Activated CD4-positive, alpha-beta T cell treated with anti-CD3 and anti-CD28 coated beads, Interleukin-2, amount 10 ng/mL, durations not matched to agents 24 days and 14 days (primary cell): ENCODE measurements at regions of chr1 and their contacts with region 1.

Region 1: DNA sequence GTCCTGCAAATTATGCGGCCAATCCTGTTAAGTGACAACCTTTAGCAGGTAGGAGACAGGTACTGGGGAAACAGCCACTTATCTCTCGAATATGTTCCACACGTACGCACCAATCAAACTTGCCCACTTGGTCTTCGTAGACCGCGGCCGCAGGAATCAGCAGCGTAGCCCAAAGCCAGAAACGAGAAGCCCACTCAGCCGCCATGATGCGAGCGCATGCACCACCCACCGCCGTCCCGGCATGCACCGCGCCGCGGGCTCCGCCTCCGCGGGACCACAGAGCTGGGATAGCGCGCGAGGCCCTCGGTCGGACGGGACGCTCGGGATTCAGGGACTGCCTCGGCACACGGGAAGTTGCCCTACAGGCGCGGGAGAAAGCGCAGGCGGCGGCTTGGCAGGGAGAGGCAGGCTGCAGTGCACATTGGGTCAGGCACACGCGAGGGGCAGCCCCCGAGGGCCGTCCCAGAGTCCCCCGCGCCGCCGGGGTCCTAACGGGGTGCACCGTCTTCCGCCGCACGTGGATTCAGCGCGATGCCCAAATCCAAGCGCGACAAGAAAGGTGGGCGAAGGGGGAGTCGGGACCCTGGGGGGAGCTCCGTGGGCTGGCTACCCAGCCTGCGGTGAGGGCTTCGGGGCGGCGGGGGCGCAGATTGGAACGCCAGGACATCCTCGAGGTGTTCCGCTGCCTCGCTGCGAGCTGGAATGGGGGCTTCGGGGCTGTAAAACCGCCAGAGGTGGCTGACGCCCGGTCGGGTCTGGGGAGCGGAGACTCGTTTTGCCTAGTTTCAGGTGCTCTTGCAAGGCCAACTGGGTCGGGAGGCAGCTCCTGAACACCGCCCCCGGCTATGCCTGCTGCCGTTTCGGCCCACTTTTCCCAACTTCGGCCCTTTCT is at the starts of genes EMC1 and MRTO4:
- DNase-seq: peak; percentile 98
- H3K4me3 Mint-ChIP-seq: peak within 1 kb of the TSS; percentile 100
- H3K27ac Mint-ChIP-seq: peak within 1 kb of the TSS; percentile 98
- H3K4me1 Mint-ChIP-seq: peaks cover 24% of the 10 kb centered on the region
- H3K27me3 Mint-ChIP-seq: no peaks in the 10 kb centered on the region
- total RNA-seq, gene EMC1: 67.9 and 71.1 TPM in 2 replicates
- total RNA-seq, gene MRTO4: 132 and 135 TPM in 2 replicates

Region 2: DNA sequence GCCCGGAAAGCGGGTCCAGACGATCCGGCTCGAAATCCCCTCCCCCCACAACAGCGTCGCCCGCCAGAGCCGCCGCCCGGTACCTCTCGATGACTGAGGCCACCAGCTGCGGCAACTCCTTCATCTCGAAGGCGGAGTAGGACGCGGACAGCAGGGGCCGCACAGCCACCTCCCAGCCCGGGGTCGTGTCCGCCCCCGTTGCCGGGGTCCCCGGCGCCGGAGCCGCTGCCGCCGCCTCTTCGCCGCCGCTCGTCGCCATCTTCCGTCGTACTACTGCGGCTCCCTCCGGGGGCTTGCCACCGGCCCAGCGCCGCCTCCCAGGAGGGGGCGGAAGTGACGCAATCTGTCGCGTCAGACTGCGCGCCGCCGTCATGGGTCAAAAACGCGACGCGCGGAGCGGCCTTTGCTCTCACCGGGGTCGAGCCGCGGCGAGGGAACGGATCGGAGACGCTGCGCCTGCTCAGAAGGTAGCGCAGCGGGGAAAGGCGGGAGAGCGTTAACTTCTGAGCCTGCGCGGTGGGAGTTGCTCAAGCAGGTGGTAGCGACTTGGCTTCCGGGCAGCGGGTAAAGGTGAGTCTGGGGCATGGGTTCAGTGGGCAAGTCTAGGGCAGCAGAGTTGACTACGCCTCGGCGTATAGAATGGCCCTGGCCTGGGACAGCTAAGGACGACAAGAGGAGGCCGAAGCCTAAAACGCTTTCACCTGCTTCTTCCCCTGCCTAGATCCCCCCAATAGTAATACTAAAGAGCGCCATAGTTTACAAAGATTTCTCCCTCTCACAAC is 41.4 kb before region 1 on chr1 and contains the start of gene UBR4:
- intact Hi-C with region 1: loop called (anchors 1 kb)
- DNase-seq: peak; percentile 99
- H3K4me3 Mint-ChIP-seq: peak within 1 kb of the TSS; percentile 97
- H3K27ac Mint-ChIP-seq: peak within 1 kb of the TSS; percentile 94
- H3K4me1 Mint-ChIP-seq: peaks cover 51% of the 10 kb centered on the region
- H3K27me3 Mint-ChIP-seq: no peaks in the 10 kb centered on the region
- total RNA-seq, gene UBR4: 145 and 162 TPM in 2 replicates

Region 3: DNA sequence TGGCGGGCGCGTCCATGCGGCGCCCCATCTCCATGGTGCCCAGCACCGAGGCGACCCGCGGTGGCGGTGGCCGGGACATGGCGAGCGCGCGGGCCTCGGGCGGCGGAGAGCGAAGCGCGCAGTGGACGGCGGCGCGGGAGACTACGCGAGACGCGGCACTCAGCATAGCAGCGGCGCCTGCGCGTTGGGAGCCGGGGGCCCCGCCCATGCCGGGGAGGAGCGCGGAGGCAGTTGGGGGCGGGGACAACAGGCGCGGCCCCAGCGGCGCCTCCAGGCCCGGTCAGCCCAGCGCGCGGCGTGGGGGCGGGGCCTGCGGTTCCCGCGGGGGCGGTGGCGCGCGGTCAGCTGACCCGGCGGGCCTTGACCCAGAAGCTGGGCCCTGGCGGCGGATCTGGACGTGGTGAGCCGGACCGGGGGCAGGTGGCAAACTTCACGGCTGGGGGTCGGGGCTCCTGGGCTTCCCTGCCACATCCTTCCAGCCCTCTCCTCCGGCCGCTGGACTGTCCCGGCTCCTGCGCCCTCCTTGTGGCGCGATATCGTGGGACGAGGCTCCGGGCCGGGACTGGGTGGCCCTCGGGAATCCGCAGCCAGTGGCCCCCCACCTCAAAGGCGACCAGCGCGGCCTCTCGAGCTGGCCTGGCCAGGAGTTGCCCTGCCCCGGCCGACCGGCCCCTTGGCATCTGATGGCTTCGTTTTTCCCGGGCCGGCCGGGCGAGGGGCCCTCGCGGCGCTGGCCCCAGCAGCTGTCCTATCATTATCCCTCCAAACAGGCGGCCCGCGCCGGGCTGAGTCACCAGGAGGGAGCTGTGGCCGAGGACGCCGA is 60.6 kb after region 1 on chr1 and contains the starts of genes AKR7A2 and SLC66A1:
- intact Hi-C with region 1: loop called (anchors 1 kb)
- DNase-seq: peak; percentile 99
- H3K4me3 Mint-ChIP-seq: peak within 1 kb of the TSS; percentile 92
- H3K27ac Mint-ChIP-seq: peak within 1 kb of the TSS; percentile 89
- H3K4me1 Mint-ChIP-seq: peaks cover 35% of the 10 kb centered on the region
- H3K27me3 Mint-ChIP-seq: no peaks in the 10 kb centered on the region
- total RNA-seq, gene AKR7A2: 33.6 and 35.4 TPM in 2 replicates
- total RNA-seq, gene SLC66A1: 9.2 and 10.1 TPM in 2 replicates

Region 4: GRCh38 chr1:19643602-19644394 is 392.2 kb after region 1 on chr1 and contains the start of gene NBL1:
- intact Hi-C with region 1: loop called (anchors 10 kb)
- DNase-seq: peak; percentile 94
- H3K4me3 Mint-ChIP-seq: peak within 1 kb of the TSS; percentile 98
- H3K27ac Mint-ChIP-seq: peak within 1 kb of the TSS; percentile 88
- H3K4me1 Mint-ChIP-seq: peaks cover 28% of the 10 kb centered on the region
- H3K27me3 Mint-ChIP-seq: peaks cover 19% of the 10 kb centered on the region
- total RNA-seq, gene NBL1: 51.7 and 54.1 TPM in 2 replicates